ENCODE measurements at regions of chr2 and their contacts with region 1.

Region 1: DNA sequence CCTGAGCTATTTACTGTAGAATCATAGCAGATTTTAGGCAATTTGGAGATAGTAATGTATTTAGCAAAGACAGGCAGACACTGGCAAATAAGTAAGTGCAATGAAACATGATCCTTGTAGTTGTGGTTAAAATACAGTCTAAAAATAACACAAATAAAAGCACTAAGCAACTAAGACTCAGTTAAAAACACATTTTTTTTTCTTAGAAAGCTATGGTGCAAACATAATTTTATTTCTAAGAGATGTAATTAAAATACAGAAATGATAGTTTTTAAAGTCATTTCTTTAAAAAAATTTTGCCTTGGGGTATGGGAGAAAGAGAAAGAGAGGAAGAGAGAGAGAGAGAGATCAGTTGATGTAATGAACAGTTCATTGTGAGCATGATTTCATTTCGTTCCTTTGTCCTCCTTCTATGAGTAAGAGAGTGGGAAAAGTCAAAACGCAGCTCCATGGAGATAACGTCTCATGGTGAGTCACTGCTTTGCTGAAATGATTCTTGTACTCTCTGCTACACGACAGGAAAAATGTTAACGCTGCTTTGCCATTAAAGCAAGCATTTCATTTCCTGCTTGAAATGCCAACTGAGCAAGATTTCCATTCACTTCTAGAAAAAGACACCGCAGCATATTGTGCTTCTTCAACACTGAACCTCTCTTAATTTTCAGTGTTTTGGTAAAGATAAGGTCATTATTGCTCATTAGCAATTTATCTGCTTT is 61.3 kb upstream of the PGAP1 start:
- DNase-seq: peak; percentile 61
- H3K4me3 Mint-ChIP-seq: peak overlapping the region; percentile 7
- H3K27ac Mint-ChIP-seq: peak overlapping the region; percentile 88
- H3K4me1 Mint-ChIP-seq: peaks cover 61% of the 10 kb centered on the region
- H3K27me3 Mint-ChIP-seq: no peaks in the 10 kb centered on the region

Region 2: DNA sequence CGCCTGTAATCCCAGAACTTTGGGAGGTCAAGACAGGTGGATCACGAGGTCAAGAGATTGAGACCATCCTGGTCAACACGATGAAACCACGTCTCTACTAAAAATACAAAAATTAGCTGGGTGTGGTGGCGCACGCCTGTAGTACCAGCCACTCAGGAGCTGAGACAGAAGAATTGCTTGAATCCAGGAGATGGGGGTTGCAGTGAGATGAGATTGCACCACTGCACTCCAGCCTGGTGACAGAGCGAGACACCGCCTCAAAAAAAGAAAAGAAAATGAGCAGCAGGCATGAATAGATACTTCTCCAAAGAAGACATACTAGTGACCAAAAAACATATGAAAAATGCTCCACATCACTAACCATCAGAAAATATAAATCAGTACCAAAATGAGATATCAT is 1057.7 kb before region 1 on chr2:
- CTCF ChIA-PET with region 1: no interaction called
- POLR2A ChIA-PET with region 1: no interaction called
- intact Hi-C with region 1: no loop called
- DNase-seq: no peak
- H3K4me3 Mint-ChIP-seq: no peak overlapping the region
- H3K27ac Mint-ChIP-seq: no peak overlapping the region
- H3K4me1 Mint-ChIP-seq: no peaks in the 10 kb centered on the region
- H3K27me3 Mint-ChIP-seq: no peaks in the 10 kb centered on the region

Region 3: GRCh38 chr2:196639180-196640030 is 348.4 kb before region 1 on chr2 and contains the start of gene CCDC150:
- CTCF ChIA-PET with region 1: no interaction called
- POLR2A ChIA-PET with region 1: no interaction called
- intact Hi-C with region 1: no loop called
- DNase-seq: peak; percentile 97
- H3K4me3 Mint-ChIP-seq: peak within 1 kb of the TSS; percentile 90
- H3K27ac Mint-ChIP-seq: peak within 1 kb of the TSS; percentile 62
- H3K4me1 Mint-ChIP-seq: peaks cover 15% of the 10 kb centered on the region
- H3K27me3 Mint-ChIP-seq: no peaks in the 10 kb centered on the region
- total RNA-seq, gene CCDC150: 13.2 to 13.9 TPM

Region 4: GRCh38 chr2:196961889-196962288 is 25.9 kb before region 1 on chr2:
- CTCF ChIA-PET with region 1: no interaction called
- POLR2A ChIA-PET with region 1: interaction called, 15 read pairs
- intact Hi-C with region 1: loop called (anchors 1 kb)
- DNase-seq: peak; percentile 36
- H3K4me3 Mint-ChIP-seq: no peak overlapping the region
- H3K27ac Mint-ChIP-seq: peak overlapping the region; percentile 16
- H3K4me1 Mint-ChIP-seq: peaks cover 27% of the 10 kb centered on the region
- H3K27me3 Mint-ChIP-seq: no peaks in the 10 kb centered on the region

Region 5: GRCh38 chr2:196970099-196970498 is 17.7 kb before region 1 on chr2:
- CTCF ChIA-PET with region 1: no interaction called
- POLR2A ChIA-PET with region 1: interaction called, 3 read pairs
- intact Hi-C with region 1: loop called (anchors 1 kb)
- DNase-seq: no peak
- H3K4me3 Mint-ChIP-seq: no peak overlapping the region
- H3K27ac Mint-ChIP-seq: peak overlapping the region; percentile 13
- H3K4me1 Mint-ChIP-seq: peaks cover 11% of the 10 kb centered on the region
- H3K27me3 Mint-ChIP-seq: no peaks in the 10 kb centered on the region

Region 6: GRCh38 chr2:197001921-197002320 is 14.1 kb after region 1 on chr2:
- CTCF ChIA-PET with region 1: no interaction called
- POLR2A ChIA-PET with region 1: no interaction called
- intact Hi-C with region 1: no loop called
- DNase-seq: no peak
- H3K4me3 Mint-ChIP-seq: no peak overlapping the region
- H3K27ac Mint-ChIP-seq: no peak overlapping the region
- H3K4me1 Mint-ChIP-seq: peaks cover 2% of the 10 kb centered on the region
- H3K27me3 Mint-ChIP-seq: no peaks in the 10 kb centered on the region

Region 7: GRCh38 chr2:197042739-197043196 is 55.0 kb after region 1 on chr2:
- CTCF ChIA-PET with region 1: no interaction called
- POLR2A ChIA-PET with region 1: no interaction called
- intact Hi-C with region 1: loop called (anchors 5 kb)
- DNase-seq: peak; percentile 22
- H3K4me3 Mint-ChIP-seq: no peak overlapping the region
- H3K27ac Mint-ChIP-seq: peak overlapping the region; percentile 86
- H3K4me1 Mint-ChIP-seq: peaks cover 46% of the 10 kb centered on the region
- H3K27me3 Mint-ChIP-seq: no peaks in the 10 kb centered on the region

Region 8: GRCh38 chr2:197324801-197325200 is 337.0 kb after region 1 on chr2:
- CTCF ChIA-PET with region 1: no interaction called
- POLR2A ChIA-PET with region 1: no interaction called
- intact Hi-C with region 1: loop called (anchors 5 kb)
- DNase-seq: no peak
- H3K4me3 Mint-ChIP-seq: no peak overlapping the region
- H3K27ac Mint-ChIP-seq: peak overlapping the region; percentile 78
- H3K4me1 Mint-ChIP-seq: peaks cover 74% of the 10 kb centered on the region
- H3K27me3 Mint-ChIP-seq: no peaks in the 10 kb centered on the region

Region 9: DNA sequence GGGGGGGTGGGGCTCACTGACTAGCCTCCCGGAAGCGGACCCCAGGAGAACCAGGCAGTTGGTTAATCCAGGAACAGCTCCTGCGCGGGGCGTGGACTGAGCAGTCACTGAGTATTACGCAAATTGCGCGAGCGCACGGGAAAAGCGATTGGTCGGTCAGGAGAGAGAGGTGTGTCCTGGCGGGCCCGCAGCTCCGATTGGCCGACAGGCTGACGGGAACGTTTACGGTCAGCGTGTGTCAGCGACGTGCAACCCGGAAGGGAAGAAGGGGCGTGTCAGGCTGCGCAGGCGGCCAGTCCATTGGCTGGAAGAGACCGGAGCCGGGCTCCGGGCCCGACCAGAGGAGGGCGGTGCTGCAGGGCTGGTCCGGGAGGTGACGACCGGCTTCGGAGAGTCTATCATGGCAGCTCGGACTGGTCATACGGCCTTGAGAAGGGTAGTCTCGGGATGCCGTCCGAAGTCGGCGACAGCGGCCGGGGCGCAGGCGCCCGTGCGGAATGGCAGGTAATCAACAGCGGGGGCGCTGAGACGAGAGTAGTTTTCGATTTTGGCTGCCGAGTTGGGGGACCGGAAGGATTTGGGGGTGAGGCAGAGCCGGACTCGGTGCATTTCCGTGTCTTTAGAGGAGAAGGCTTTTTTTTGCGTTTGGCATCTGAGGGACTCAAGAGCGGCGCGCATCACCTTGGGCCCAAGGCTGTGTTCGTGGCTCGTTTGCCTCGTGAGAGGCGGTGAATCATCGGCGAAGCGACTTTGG is 465.5 kb after region 1 on chr2 and contains the start of gene COQ10B:
- CTCF ChIA-PET with region 1: no interaction called
- POLR2A ChIA-PET with region 1: no interaction called
- intact Hi-C with region 1: loop called (anchors 5 kb)
- DNase-seq: peak; percentile 100
- H3K4me3 Mint-ChIP-seq: peak within 1 kb of the TSS; percentile 99
- H3K27ac Mint-ChIP-seq: peak within 1 kb of the TSS; percentile 100
- H3K4me1 Mint-ChIP-seq: peaks cover 39% of the 10 kb centered on the region
- H3K27me3 Mint-ChIP-seq: no peaks in the 10 kb centered on the region
- total RNA-seq, gene COQ10B: 21.5 TPM

Measured in activated CD4-positive, alpha-beta memory T cell treated with anti-CD3 and anti-CD28 coated beads for 36 hours (primary cell).